Sigmoid colon (tissue), 7 donors: ENCODE measurements at regions of chr7 and their contacts with region 1.

Region 1: DNA sequence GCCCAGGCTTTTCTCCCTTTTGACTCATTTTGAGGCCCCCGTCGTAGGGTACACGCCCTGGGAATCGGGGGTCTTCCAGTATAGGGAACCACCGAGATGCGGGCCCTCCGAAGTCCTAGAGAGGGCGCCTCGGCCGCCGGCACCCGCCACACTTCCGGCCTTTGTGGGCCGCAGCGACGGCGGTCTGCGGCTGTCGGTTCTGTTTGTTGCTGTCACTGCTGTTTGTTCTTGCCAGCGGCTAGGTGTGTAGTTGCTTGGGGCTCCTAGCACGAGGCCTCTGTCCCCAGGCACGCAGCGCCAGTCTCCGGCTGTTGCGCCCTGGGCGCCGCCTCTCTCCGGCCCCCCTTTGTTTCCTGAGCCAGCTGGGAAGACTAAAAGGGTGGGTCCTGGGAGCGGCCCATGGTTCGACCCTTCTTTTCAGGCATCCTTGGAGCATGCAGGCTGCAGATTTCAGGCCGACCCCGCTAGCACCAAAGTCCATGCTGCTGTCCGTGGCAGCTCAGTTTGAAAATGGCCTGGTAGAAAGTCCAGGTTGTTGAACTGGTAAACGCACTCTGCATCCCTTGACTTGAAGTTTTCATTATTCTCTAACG is 17.8 kb upstream of the ZKSCAN1 start:
- DNase-seq: peak; percentile 78
- H3K4me3 ChIP-seq: peak overlapping the region; percentile 43 to 56 (median 50)
- H3K27ac ChIP-seq: peak overlapping the region; percentile 63 to 80 (median 72)
- H3K4me1 ChIP-seq: peaks cover 0 to 20% (median 6%) of the 10 kb centered on the region in 4 donors
- H3K27me3 ChIP-seq: no peaks in the 10 kb centered on the region
- CTCF ChIP-seq: peak in 3 of 4 experiments; percentile 32 to 53 (median 47)
- EP300 ChIP-seq: no peak
- POLR2A ChIP-seq: peak; percentile 36 to 37

Region 2: DNA sequence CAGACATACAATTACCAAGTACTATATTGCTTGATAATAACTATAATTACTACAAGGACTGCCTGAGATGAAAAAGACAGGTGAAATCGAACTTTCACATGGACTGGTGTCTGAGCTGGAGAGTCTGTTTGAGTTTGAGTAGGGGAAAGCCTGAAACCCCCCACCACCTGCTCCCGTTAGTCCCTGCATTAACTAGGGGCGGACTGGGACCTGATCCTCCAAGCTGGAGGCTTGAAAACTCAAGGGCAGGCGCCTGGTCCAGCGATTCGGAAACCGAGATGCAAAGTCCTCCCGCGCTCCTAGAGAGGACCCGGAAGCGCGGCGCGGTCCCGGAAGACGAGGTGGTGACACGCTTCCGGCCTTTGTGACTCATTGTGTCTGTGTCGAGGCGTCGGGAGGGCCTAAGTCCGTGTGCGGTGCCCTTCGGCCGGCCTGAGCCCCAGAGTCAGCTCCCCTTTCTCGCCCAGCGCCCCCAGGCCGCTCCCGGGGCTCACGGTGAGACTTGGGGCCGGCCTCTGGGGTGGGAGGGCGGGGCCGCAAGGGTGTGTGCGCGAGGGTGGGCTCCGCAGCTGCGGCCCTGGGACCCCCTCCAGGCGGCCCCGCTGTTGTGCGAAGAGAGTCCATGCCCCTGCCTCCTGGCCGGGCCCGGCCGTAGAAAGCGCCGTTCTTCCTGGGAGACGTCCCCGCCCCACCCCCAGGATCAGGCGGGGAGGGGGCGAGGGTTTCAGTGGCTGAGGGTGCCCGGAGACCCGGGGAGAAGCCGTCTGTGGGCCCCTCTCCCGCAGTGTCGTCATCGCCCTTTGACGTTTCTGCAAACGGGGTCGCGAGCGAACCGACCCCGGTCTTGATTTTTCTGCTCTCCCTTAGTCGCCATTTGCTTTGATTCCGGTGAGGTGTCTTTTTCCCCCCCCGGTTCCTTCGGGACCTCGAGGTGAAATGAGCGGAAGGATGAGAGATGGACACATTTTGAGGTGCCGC is 17.9 kb after region 1 on chr7 and contains the start of gene ZKSCAN1:
- intact Hi-C with region 1: loop called (anchors 2 kb)
- DNase-seq: peak; percentile 95
- H3K4me3 ChIP-seq: peak within 1 kb of the TSS; percentile 79 to 100 (median 100)
- H3K27ac ChIP-seq: peak within 1 kb of the TSS; percentile 98 to 100 (median 100)
- H3K4me1 ChIP-seq: peaks cover 0 to 50% (median 40%) of the 10 kb centered on the region in 4 donors
- H3K27me3 ChIP-seq: no peaks in the 10 kb centered on the region
- CTCF ChIP-seq: no peak
- EP300 ChIP-seq: no peak
- POLR2A ChIP-seq: peak; percentile 69 to 78
- total RNA-seq, gene ZKSCAN1: 27.8 to 32.7 (median 31.6) TPM